K562 (cell line): ENCODE measurements at regions of chr20 and their contacts with region 1.

Region 1: GRCh38 chr20:54093423-54094267 is 23.3 kb upstream of the BCAS1 start:
- DNase-seq: no peak
- ATAC-seq: no peak
- H3K4me3 ChIP-seq: no peak overlapping the region
- H3K27ac ChIP-seq: no peak overlapping the region
- H3K4me1 ChIP-seq: no peaks in the 10 kb centered on the region
- H3K27me3 ChIP-seq: peaks cover 0 to 2% of the 10 kb centered on the region in 2 experiments; a peak in 2 of 5 replicates
- CTCF ChIP-seq: no peak
- EP300 ChIP-seq: no peak
- POLR2A ChIP-seq: no peak
- RAD21 ChIP-seq: no peak

Region 2: GRCh38 chr20:54156981-54157835 is 63.6 kb after region 1 on chr20:
- CTCF ChIA-PET with region 1: no interaction called
- POLR2A ChIA-PET with region 1: no interaction called
- in situ Hi-C with region 1: no loop called
- intact Hi-C with region 1: loop called (anchors 5 kb)
- DNase-seq: no peak
- ATAC-seq: no peak
- H3K4me3 ChIP-seq: no peak overlapping the region
- H3K27ac ChIP-seq: no peak overlapping the region
- H3K4me1 ChIP-seq: no peaks in the 10 kb centered on the region
- H3K27me3 ChIP-seq: peaks cover 27 to 39% of the 10 kb centered on the region in 2 experiments; a peak in 4 of 5 replicates
- CTCF ChIP-seq: no peak
- EP300 ChIP-seq: no peak
- POLR2A ChIP-seq: no peak
- RAD21 ChIP-seq: no peak